ENCODE measurements at regions of chr4 and their contacts with region 1.

Region 1: GRCh38 chr4:159764343-159764952 is 661.6 kb downstream of the RAPGEF2 start:
- DNase-seq: peak; percentile 59
- H3K4me3 ChIP-seq: peak overlapping the region in 1 of 2 experiments; percentile 17; a peak in 1 of 4 replicates
- H3K27ac ChIP-seq: peak overlapping the region in 1 of 2 experiments; percentile 39; a peak in 2 of 4 replicates
- H3K4me1 ChIP-seq: peaks cover 0 to 11% of the 10 kb centered on the region in 2 experiments; a peak in 2 of 4 replicates
- H3K27me3 ChIP-seq: no peaks in the 10 kb centered on the region
- CTCF ChIP-seq: peak; percentile 70
- EP300 ChIP-seq: no peak
- RAD21 ChIP-seq: peak; percentile 79

Region 2: DNA sequence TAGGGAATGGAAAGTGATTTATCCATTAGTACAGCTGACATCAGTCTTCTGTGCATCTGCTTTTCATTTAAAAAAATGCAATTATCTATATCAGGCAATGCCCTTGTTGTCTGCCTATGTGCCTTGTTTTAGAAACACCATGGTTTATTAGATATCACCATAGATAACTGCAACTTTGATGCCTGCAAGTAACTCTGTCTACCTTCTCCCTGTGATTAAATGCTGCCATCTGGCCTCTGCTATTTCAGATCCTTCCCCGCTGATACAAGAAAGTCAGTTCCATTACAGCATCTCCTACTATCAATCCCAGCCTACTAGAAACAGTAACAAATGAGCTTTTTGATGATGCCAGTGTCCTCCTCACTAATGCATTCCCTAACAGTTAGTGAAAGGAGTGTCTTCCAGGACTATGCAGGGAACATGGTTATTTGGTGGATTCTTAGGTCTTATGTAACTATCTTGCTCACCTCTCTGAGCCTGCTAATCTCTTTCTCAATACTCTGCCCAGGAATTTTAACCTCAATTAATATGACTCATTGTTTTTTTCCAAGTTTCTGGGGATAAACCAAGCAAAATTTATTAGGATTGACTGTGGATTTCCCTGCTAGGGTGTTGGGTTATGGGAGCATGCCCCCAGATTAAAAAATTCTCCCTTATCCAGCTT is 216.7 kb before region 1 on chr4:
- CTCF ChIA-PET with region 1: no interaction called
- POLR2A ChIA-PET with region 1: no interaction called
- DNase-seq: peak; percentile 37
- H3K4me3 ChIP-seq: no peak overlapping the region
- H3K27ac ChIP-seq: peak overlapping the region in 1 of 2 experiments; percentile 74; a peak in 2 of 4 replicates
- H3K4me1 ChIP-seq: peaks cover 0 to 5% of the 10 kb centered on the region in 2 experiments; a peak in 2 of 4 replicates
- H3K27me3 ChIP-seq: no peaks in the 10 kb centered on the region
- CTCF ChIP-seq: no peak
- EP300 ChIP-seq: peak in 1 of 2 experiments; percentile 87; a peak in 2 of 4 replicates
- RAD21 ChIP-seq: peak; percentile 14; the same call in 1 of the 2 replicates

Region 3: GRCh38 chr4:159778298-159778697 is 13.8 kb after region 1 on chr4:
- CTCF ChIA-PET with region 1: interaction called, 18 read pairs
- POLR2A ChIA-PET with region 1: no interaction called
- DNase-seq: no peak
- H3K4me3 ChIP-seq: no peak overlapping the region
- H3K27ac ChIP-seq: no peak overlapping the region
- H3K4me1 ChIP-seq: peaks cover 0 to 5% of the 10 kb centered on the region in 2 experiments; a peak in 2 of 4 replicates
- H3K27me3 ChIP-seq: no peaks in the 10 kb centered on the region
- CTCF ChIP-seq: no peak
- EP300 ChIP-seq: no peak
- RAD21 ChIP-seq: no peak

Measured in SK-N-SH (cell line).